Mammary epithelial cell (primary cell): ENCODE measurements at regions of chr12 and their contacts with region 1.

Region 1: DNA sequence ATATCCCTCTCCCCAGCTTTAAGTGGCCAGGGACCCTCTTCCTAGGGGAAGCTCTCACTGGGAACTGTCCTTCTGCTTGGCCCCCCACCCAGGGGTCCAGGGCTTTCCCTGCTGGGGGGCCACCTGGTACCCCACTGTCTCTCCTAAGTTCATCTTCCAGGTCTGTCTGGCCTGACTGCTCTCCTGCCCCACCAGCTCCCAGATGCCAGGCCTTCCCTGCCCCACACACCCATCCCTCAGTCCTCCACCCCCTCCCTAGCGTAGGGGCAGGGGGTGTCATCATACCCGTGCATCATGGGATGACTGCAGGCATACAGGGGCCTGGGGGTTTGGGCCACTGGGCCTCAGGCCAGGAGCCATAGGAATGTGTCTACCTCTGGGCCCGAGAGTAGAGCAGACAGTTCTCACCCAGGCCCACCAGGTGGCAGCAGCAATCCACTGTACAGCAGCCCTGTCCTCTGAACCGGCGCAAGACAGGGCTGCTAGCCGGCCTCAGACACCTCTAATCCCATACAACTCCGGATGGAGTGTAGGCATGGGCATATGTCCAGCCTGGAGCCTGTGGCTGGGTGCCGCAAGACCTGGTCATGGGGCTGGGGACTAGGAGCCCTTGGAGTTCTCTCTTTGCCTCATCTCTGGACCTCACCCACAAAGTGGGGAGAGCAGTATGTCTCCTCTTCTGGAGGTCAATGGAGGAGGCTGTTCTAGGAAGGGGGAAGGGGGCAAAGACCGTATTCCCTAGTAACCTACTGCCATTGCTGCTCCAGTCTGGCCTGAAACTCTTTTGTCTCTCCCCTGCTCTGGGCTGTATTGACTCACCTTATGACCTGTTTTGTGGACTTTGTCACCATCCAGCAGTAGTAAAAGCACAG is 10.0 kb upstream of the SMARCD1 start:
- DNase-seq: peak; percentile 62
- H3K4me3 ChIP-seq: no peak overlapping the region
- H3K27ac ChIP-seq: no peak overlapping the region
- H3K4me1 ChIP-seq: peaks cover 3% of the 10 kb centered on the region
- H3K27me3 ChIP-seq: no peaks in the 10 kb centered on the region
- CTCF ChIP-seq: peak; percentile 84 to 94

Region 2: DNA sequence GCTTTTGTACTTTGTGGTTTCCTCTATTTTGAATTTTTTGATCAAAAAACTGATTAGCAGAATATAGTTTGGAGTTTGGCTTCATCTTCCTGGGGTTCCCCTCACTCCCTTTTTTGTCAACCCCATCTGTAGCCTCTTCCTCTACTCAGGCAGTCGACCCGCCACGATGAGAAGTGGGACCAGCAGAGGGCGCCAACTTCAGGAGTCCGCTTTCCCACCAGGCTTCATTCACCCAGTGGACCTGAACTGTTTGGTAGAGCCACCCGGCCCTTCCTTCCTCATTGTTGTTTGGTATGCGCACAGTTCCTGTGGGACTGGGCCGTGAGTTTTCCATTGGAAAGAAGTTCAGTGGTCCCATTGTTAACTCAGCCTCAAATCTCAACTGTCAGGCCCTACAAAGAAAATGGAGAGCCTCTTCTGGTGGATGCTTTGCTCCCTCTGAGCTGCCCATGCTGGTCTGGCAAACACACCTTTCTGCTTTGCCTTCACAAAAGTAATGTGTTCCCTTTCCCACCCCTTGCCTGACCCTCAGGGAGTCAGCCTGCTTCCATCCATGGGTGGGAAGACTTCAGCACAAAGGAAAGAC is 312.1 kb before region 1 on chr12:
- CTCF ChIA-PET with region 1: no interaction called
- dilution Hi-C with region 1: no loop called
- in situ Hi-C with region 1: loop called in 1 of 2 experiments (anchors 25 kb)
- intact Hi-C with region 1: no loop called
- DNase-seq: peak; percentile 19
- H3K4me3 ChIP-seq: no peak overlapping the region
- H3K27ac ChIP-seq: no peak overlapping the region
- H3K4me1 ChIP-seq: no peaks in the 10 kb centered on the region
- H3K27me3 ChIP-seq: no peaks in the 10 kb centered on the region
- CTCF ChIP-seq: peak; percentile 69 to 70

Region 3: GRCh38 chr12:49866859-49867579 is 208.2 kb before region 1 on chr12:
- CTCF ChIA-PET with region 1: interaction called, 3 read pairs
- dilution Hi-C with region 1: loop called (anchors 25 kb)
- in situ Hi-C with region 1: no loop called
- intact Hi-C with region 1: loop called (anchors 1 kb)
- DNase-seq: peak; percentile 50
- H3K4me3 ChIP-seq: no peak overlapping the region
- H3K27ac ChIP-seq: no peak overlapping the region
- H3K4me1 ChIP-seq: no peaks in the 10 kb centered on the region
- H3K27me3 ChIP-seq: peaks cover 2% of the 10 kb centered on the region
- CTCF ChIP-seq: peak; percentile 97 to 99

Region 4: GRCh38 chr12:50043854-50044253 is 31.3 kb before region 1 on chr12:
- CTCF ChIA-PET with region 1: no interaction called
- dilution Hi-C with region 1: no loop called
- in situ Hi-C with region 1: no loop called
- intact Hi-C with region 1: loop called (anchors 1 kb)
- DNase-seq: no peak
- H3K4me3 ChIP-seq: no peak overlapping the region
- H3K27ac ChIP-seq: no peak overlapping the region
- H3K4me1 ChIP-seq: no peaks in the 10 kb centered on the region
- H3K27me3 ChIP-seq: no peaks in the 10 kb centered on the region
- CTCF ChIP-seq: no peak

Region 5: DNA sequence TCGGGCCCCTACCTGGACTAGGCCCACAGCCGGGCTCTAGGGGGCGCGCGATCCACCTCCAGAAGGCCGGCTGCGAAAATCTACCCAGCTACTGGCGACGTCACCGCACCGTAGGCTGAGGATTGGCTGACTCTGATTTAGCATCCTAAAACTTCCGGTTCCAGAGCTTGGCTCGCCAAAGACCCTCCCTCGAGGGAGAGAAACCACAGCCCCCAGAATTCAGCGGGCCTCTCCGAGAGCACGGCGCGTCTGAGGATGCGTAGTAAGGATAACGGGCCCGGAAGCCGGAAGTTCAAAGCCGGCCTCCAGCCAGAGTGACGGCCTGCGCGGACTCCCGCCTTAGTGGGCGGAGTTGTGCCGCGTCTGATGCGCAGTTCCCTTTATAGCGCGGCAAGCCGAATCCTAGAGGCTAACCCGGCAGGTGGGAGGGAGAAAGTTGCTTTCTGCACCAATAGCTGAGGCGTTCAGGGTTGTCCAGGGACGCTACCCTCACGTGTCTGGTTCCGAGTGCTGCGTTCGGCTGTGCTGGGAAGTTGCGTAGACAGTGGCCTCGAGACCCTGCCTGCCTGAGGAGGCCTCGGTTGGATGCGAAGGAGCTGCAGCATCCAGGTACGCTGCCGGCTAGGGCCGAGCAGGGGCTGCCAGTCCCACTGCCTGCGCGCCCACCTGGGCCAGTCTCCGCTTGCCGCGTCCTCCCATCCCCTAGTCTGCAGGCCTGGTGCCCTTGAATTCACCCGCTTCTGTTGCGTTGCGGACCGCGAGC is 36.7 kb after region 1 on chr12 and contains the start of gene COX14:
- CTCF ChIA-PET with region 1: no interaction called
- dilution Hi-C with region 1: no loop called
- in situ Hi-C with region 1: no loop called
- intact Hi-C with region 1: loop called (anchors 1 kb)
- DNase-seq: peak; percentile 100
- H3K4me3 ChIP-seq: peak within 1 kb of the TSS; percentile 64 to 100 (median 87)
- H3K27ac ChIP-seq: peak within 1 kb of the TSS; percentile 76
- H3K4me1 ChIP-seq: peaks cover 15% of the 10 kb centered on the region
- H3K27me3 ChIP-seq: no peaks in the 10 kb centered on the region
- CTCF ChIP-seq: peak; percentile 83 to 94
- total RNA-seq, gene COX14: 38.5 to 51.3 TPM

Region 6: DNA sequence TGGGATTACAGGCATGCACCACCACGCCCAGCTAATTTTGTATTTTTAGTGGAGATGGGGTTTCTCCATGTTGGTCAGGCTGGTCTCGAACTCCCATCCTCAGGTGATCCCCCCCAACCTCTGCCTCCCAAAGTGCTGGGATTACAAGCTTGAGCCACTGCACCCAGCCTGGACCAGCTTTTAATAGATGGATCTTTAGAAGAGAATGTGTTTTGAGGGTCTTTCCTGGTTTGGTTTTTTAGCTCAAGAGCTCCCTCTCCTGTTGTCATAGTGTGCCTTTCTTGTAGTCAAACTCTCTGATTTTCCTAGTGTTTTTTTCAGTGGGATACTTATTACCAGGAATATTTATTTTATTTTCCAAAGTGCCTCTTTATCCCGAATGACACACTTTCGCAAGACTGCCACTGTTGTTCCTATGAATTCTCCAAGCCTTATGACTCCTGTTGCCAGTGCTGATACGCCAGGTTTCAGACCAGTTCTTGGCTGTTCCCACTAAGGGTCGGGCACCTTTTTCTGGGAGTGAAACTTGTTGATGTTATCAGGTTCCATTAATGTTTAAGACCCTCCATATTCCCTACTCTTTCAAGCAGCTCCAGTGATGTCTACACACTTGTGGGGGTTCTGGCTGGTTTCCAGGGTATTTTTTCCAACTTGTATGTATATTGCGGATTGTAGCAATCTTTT is 239.6 kb after region 1 on chr12:
- CTCF ChIA-PET with region 1: no interaction called
- dilution Hi-C with region 1: no loop called
- in situ Hi-C with region 1: loop called in 1 of 2 experiments (anchors 25 kb)
- intact Hi-C with region 1: loop called (anchors 1 kb)
- DNase-seq: no peak
- H3K4me3 ChIP-seq: no peak overlapping the region
- H3K27ac ChIP-seq: no peak overlapping the region
- H3K4me1 ChIP-seq: peaks cover 7% of the 10 kb centered on the region
- H3K27me3 ChIP-seq: no peaks in the 10 kb centered on the region
- CTCF ChIP-seq: peak; percentile 63 to 65